AG04450 (cell line): ENCODE measurements at regions of chr15 and their contacts with region 1.

Region 1: GRCh38 chr15:28881170-28881569 is 4.6 kb upstream of the APBA2 start:
- DNase-seq: no peak
- H3K4me3 ChIP-seq: no peak overlapping the region
- H3K27ac ChIP-seq: no peak overlapping the region
- H3K27me3 ChIP-seq: peaks cover 2% of the 10 kb centered on the region
- CTCF ChIP-seq: peak; percentile 27

Region 2: GRCh38 chr15:29090617-29091466 is 209.7 kb after region 1 on chr15:
- CTCF ChIA-PET with region 1: interaction called, 20 read pairs
- POLR2A ChIA-PET with region 1: no interaction called
- DNase-seq: no peak
- H3K4me3 ChIP-seq: no peak overlapping the region
- H3K27ac ChIP-seq: no peak overlapping the region
- H3K27me3 ChIP-seq: no peaks in the 10 kb centered on the region
- CTCF ChIP-seq: peak; percentile 86

Region 3: GRCh38 chr15:29149738-29150075 is 268.5 kb after region 1 on chr15:
- CTCF ChIA-PET with region 1: no interaction called
- POLR2A ChIA-PET with region 1: no interaction called
- DNase-seq: no peak
- H3K4me3 ChIP-seq: no peak overlapping the region
- H3K27ac ChIP-seq: no peak overlapping the region
- H3K27me3 ChIP-seq: no peaks in the 10 kb centered on the region
- CTCF ChIP-seq: no peak